ENCODE measurements at regions of chr18 and their contacts with region 1.

Region 1: DNA sequence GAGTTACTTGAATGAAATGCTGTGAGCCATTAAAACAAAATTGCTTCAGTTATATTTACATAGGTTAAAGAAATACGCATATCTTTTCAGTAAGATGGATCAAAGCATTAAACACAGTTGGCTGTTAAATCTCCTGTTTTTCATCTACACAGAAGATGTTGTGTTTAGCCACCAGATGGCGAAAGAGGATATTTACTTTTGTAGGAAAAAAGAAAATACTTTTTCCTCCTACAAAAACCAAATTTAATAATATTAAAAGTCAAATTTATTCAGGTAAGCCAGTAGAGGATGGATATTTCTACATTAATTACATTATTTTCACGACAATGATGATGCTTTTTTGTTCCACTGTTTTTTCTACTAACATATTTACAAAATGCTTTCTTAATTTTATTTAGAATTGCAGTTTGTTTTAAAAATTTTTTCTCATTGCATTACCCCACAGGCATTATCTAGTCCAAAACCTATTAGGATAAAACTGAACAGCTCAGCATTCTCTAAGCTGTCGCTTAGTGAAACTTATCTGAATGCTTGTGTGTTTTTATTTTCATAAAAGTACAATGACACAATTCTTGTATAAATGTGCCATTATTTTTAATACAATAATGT is 173.7 kb downstream of the ASXL3 start:
- DNase-seq: peak; percentile 39
- ATAC-seq: no peak
- H3K4me3 ChIP-seq: no peak overlapping the region
- H3K27ac ChIP-seq: no peak overlapping the region
- H3K4me1 ChIP-seq: peaks cover 3% of the 10 kb centered on the region; the same call in 1 of the 2 replicates
- H3K27me3 ChIP-seq: 0 out of 2 replicates have a peak, but pooled peaks cover 1% of the 10 kb centered on the region
- CTCF ChIP-seq: peak; percentile 50
- POLR2A ChIP-seq: no peak
- RAD21 ChIP-seq: peak; percentile 24; the same call in 1 of the 2 replicates

Region 2: GRCh38 chr18:33507019-33507418 is 244.7 kb before region 1 on chr18:
- CTCF ChIA-PET with region 1: no interaction called
- POLR2A ChIA-PET with region 1: no interaction called
- dilution Hi-C with region 1: no loop called
- in situ Hi-C with region 1: no loop called
- intact Hi-C with region 1: no loop called
- DNase-seq: no peak
- ATAC-seq: no peak
- H3K4me3 ChIP-seq: no peak overlapping the region
- H3K27ac ChIP-seq: no peak overlapping the region
- H3K4me1 ChIP-seq: no peaks in the 10 kb centered on the region
- H3K27me3 ChIP-seq: no peaks in the 10 kb centered on the region
- CTCF ChIP-seq: no peak
- POLR2A ChIP-seq: no peak
- RAD21 ChIP-seq: no peak

Region 3: DNA sequence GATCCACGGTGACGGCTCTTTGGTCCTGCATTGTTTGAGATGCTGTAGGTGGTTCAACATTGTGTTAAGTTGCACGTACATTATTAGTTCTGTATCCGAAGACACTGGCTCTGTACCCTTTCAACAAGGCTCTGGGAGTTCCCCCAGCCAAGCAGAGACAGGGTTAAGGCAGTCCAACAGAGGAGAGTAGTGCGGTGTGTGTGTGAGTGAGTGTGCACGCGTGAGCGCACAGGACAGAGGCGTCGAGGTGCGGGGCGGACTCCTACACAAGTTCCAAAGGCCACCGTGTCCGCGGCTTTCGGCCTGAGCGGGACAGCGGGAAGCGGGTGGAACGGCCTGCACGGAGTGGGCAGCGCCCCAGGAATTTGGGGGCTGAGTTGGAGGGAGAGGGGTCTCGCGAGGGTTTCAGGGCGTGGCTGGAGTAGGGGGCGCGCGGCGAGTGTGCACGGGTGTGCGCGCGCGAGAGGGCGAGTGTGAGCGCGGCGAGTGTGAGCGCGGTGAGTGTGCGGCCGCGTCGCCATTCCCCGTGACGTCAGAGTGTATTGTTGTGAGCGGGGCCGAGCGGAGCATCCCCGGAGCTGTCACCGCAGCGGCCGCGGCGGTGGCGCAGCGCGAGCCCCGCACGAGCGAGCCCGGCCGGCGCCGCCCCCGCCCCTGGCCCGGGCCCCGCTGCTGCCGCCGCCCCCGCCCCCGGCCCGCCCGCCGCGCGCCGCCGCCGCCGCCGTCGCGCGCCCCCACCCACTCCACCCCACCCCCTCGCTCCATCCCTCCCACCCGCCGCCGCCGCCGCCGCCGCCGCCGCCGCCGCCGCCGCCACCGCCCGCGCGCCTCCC is 173.8 kb before region 1 on chr18 and contains the start of gene ASXL3:
- CTCF ChIA-PET with region 1: no interaction called
- POLR2A ChIA-PET with region 1: no interaction called
- dilution Hi-C with region 1: no loop called
- in situ Hi-C with region 1: no loop called
- intact Hi-C with region 1: loop called (anchors 5 kb)
- DNase-seq: no peak
- ATAC-seq: peak; percentile 72
- H3K4me3 ChIP-seq: peak within 1 kb of the TSS; percentile 59
- H3K27ac ChIP-seq: peak within 1 kb of the TSS; percentile 3; the same call in 1 of the 2 replicates
- H3K4me1 ChIP-seq: peaks cover 4% of the 10 kb centered on the region
- H3K27me3 ChIP-seq: peaks cover 20% of the 10 kb centered on the region
- CTCF ChIP-seq: no peak
- POLR2A ChIP-seq: no peak
- RAD21 ChIP-seq: no peak
- total RNA-seq, gene ASXL3: under 0.01 and 0.54 TPM in 2 replicates

Region 4: GRCh38 chr18:33653231-33653630 is 98.5 kb before region 1 on chr18:
- CTCF ChIA-PET with region 1: no interaction called
- POLR2A ChIA-PET with region 1: no interaction called
- dilution Hi-C with region 1: no loop called
- in situ Hi-C with region 1: no loop called
- intact Hi-C with region 1: loop called (anchors 5 kb)
- DNase-seq: no peak
- ATAC-seq: no peak
- H3K4me3 ChIP-seq: no peak overlapping the region
- H3K27ac ChIP-seq: no peak overlapping the region
- H3K4me1 ChIP-seq: no peaks in the 10 kb centered on the region
- H3K27me3 ChIP-seq: no peaks in the 10 kb centered on the region
- CTCF ChIP-seq: no peak
- POLR2A ChIP-seq: no peak
- RAD21 ChIP-seq: no peak

Region 5: DNA sequence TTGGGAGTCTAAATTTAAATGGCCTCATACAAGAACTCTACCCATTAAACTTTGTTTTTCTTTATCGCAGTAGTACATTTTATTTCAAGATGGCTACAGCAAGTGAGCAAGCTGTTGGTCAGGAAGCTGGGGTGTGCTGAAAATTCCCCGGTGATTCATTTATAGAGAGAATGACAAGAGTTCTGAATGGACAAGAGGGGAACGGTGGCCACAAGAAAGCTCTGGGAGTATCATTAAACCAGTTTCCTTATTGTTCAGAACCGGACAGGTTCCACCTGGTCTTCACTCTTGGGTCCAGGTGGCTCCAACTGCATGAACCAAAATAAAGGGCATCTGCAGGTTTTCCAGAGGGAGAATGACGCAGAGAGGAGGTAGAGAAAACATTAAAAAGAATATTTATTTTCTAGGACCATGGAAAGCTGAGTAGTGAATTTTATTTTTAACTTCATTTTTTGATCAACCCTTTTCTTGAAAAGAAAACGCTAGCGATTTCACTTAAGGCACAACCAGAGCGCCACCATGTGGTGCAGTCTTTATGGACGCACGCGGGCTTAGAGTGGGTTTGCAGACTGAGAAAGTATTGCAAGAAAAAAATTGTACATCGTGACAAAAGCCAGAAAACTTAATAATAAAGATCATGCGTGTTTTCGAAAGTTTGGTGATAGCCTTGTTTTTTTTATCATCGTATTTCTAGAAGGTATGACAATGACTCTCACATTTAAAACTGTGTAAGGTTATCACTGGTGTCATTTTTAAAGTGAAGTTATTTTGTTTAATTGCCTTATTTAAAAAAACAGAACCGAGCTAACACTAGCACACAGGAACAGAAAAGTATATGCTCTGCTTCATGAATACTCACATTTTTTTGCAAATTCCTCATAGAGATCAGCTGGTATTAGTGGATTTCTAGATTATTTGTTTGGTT is 570.9 kb after region 1 on chr18:
- CTCF ChIA-PET with region 1: interaction called, 3 read pairs
- POLR2A ChIA-PET with region 1: no interaction called
- dilution Hi-C with region 1: no loop called
- in situ Hi-C with region 1: no loop called
- intact Hi-C with region 1: loop called (anchors 10 kb)
- DNase-seq: peak; percentile 57
- ATAC-seq: 0 out of 2 replicates have a peak, but pooled peaks have one; percentile 46
- H3K4me3 ChIP-seq: no peak overlapping the region
- H3K27ac ChIP-seq: no peak overlapping the region
- H3K4me1 ChIP-seq: no peaks in the 10 kb centered on the region
- H3K27me3 ChIP-seq: no peaks in the 10 kb centered on the region
- CTCF ChIP-seq: peak; percentile 66
- POLR2A ChIP-seq: no peak
- RAD21 ChIP-seq: peak; percentile 67

Region 6: DNA sequence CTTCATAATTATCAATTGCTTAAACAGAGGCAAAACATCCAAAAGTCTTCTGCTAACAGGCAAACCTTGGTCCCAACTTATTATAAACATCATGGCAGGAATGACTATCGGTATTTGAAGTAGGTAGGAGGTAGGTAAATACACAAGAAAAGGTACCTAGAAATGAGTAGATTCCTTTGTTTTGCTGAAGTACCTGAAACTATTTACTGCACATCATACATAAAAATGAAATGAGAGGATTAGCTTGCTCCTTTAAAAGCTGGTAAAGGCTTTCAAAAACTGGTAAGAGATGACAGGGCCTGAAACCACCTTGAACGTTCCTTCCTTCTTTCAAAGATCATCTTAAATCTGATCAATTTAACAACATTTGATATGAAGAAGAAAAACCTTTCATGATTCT is 1234.2 kb after region 1 on chr18:
- CTCF ChIA-PET with region 1: no interaction called
- POLR2A ChIA-PET with region 1: no interaction called
- dilution Hi-C with region 1: no loop called
- in situ Hi-C with region 1: no loop called
- intact Hi-C with region 1: loop called (anchors 5 kb)
- DNase-seq: no peak
- ATAC-seq: no peak
- H3K4me3 ChIP-seq: no peak overlapping the region
- H3K27ac ChIP-seq: no peak overlapping the region
- H3K4me1 ChIP-seq: no peaks in the 10 kb centered on the region
- H3K27me3 ChIP-seq: no peaks in the 10 kb centered on the region; the same call in 1 of the 2 replicates
- CTCF ChIP-seq: no peak
- POLR2A ChIP-seq: no peak
- RAD21 ChIP-seq: no peak